GM12878 (cell line): ENCODE measurements at regions of chr9 and their contacts with region 1.

Region 1: DNA sequence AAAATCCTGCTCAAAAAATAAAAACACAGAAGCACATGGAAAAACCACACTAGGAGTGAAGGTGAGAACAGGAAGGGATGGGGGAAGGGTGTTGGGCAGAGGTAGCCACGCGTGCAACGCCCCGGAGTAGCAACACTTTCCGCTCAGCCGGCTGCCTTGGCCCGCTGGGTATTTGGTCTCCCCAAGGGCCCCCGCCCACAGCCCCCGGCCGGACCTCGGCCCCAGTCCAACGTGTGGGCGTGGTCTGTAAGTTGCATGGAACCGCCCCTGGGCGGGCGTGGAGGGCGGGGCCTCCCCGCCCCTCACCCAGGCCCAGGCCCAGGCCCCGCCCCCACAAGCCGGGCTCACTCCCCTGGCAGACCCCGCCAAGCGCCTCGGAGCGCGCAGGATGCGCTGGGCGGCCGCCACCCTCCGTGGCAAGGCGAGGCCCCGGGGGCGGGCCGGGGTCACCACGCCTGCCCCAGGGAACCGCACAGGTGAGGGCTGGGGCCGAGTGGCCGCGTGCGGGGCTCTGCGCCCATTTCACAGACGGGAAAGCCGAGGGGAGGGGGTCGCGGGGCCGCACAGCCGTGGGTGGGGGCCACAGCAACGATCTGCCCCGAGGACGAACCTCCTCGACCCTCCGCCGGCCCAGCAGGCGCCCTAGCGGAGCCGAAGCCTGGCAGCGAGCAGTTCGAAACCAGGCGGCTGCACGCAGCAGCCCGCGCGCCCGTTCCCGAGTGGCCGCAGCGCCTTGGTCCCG is at the start of gene SUSD3:
- DNase-seq: peak; percentile 60
- ATAC-seq: peak; percentile 77
- H3K4me3 ChIP-seq: peak within 1 kb of the TSS; percentile 81
- H3K27ac ChIP-seq: peak within 1 kb of the TSS; percentile 88
- H3K4me1 ChIP-seq: peaks cover 49% of the 10 kb centered on the region
- H3K27me3 ChIP-seq: no peaks in the 10 kb centered on the region
- CTCF ChIP-seq: no peak
- EP300 ChIP-seq: peak in 1 of 2 experiments; percentile 42; a peak in 2 of 4 replicates
- POLR2A ChIP-seq: peak; percentile 64
- RAD21 ChIP-seq: no peak
- polyA plus RNA-seq, gene SUSD3: 2.5 to 15.1 TPM

Region 2: GRCh38 chr9:92860867-92861266 is 197.7 kb before region 1 on chr9:
- CTCF ChIA-PET with region 1: no interaction called
- POLR2A ChIA-PET with region 1: no interaction called
- RAD21 ChIA-PET with region 1: no interaction called
- SMC1A ChIA-PET with region 1: no interaction called
- in situ Hi-C with region 1: no loop called
- intact Hi-C with region 1: no loop called
- DNase-seq: no peak
- ATAC-seq: no peak
- H3K4me3 ChIP-seq: no peak overlapping the region
- H3K27ac ChIP-seq: no peak overlapping the region
- H3K4me1 ChIP-seq: no peaks in the 10 kb centered on the region
- H3K27me3 ChIP-seq: no peaks in the 10 kb centered on the region
- CTCF ChIP-seq: no peak
- EP300 ChIP-seq: no peak
- POLR2A ChIP-seq: no peak
- RAD21 ChIP-seq: no peak

Region 3: GRCh38 chr9:93028448-93029006 is 30.0 kb before region 1 on chr9:
- CTCF ChIA-PET with region 1: interaction called, 5 read pairs
- POLR2A ChIA-PET with region 1: interaction called, 17 read pairs
- RAD21 ChIA-PET with region 1: interaction called, 8 read pairs
- SMC1A ChIA-PET with region 1: interaction called, 15 read pairs
- in situ Hi-C with region 1: no loop called
- intact Hi-C with region 1: loop called (anchors 2 kb)
- DNase-seq: peak; percentile 59
- ATAC-seq: peak; percentile 86
- H3K4me3 ChIP-seq: no peak overlapping the region
- H3K27ac ChIP-seq: peak overlapping the region; percentile 58
- H3K4me1 ChIP-seq: peaks cover 16% of the 10 kb centered on the region
- H3K27me3 ChIP-seq: no peaks in the 10 kb centered on the region
- CTCF ChIP-seq: no peak
- EP300 ChIP-seq: no peak
- POLR2A ChIP-seq: no peak
- RAD21 ChIP-seq: no peak

Region 4: GRCh38 chr9:93095205-93096130 is 36.9 kb after region 1 on chr9:
- CTCF ChIA-PET with region 1: interaction called, 9 read pairs
- POLR2A ChIA-PET with region 1: interaction called, 36 read pairs
- RAD21 ChIA-PET with region 1: interaction called, 13 read pairs
- SMC1A ChIA-PET with region 1: interaction called, 14 read pairs
- in situ Hi-C with region 1: no loop called
- intact Hi-C with region 1: no loop called
- DNase-seq: peak; percentile 85
- ATAC-seq: peak; percentile 81
- H3K4me3 ChIP-seq: peak overlapping the region; percentile 54
- H3K27ac ChIP-seq: peak overlapping the region; percentile 99
- H3K4me1 ChIP-seq: peaks cover 61% of the 10 kb centered on the region
- H3K27me3 ChIP-seq: no peaks in the 10 kb centered on the region
- CTCF ChIP-seq: no peak
- EP300 ChIP-seq: no peak
- POLR2A ChIP-seq: peak; percentile 78
- RAD21 ChIP-seq: no peak

Region 5: DNA sequence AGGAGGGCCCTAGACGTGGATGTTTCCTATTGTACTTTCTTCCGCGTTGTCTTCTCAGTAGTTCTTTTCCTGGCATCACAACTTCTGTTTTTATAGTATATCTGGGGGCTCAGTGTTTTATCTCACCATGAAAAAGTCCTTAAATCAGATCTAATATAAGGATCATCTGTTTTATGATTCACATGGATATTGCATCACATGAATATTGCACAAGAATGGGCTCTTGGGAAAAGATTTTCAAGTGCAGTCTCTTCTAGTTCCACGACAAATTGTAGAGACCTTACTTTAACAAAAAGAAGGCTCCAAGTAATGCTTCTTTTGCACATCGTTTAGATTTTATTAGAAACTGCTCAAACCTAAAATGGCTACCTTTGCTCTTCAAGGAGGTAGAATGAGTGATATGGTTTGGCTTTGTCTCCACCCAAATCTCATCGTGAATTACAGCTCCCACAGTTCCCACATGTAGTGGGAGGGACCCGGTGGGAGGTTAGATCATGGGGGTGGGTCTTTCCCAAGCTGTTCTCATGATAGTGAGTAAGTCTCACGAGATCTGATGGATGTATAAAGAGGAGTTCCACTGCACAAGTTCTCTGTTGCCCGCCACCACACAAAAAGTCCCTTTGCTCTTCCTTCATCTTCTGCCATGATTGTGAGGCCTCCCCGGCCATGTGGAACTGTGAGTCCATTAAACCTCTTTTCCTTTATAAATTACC is 339.3 kb after region 1 on chr9:
- CTCF ChIA-PET with region 1: no interaction called
- POLR2A ChIA-PET with region 1: no interaction called
- RAD21 ChIA-PET with region 1: no interaction called
- SMC1A ChIA-PET with region 1: no interaction called
- in situ Hi-C with region 1: no loop called
- intact Hi-C with region 1: no loop called
- DNase-seq: no peak
- ATAC-seq: no peak
- H3K4me3 ChIP-seq: no peak overlapping the region
- H3K27ac ChIP-seq: no peak overlapping the region
- H3K4me1 ChIP-seq: no peaks in the 10 kb centered on the region
- H3K27me3 ChIP-seq: peaks cover 0 to 2% of the 10 kb centered on the region in 2 experiments; a peak in 1 of 4 replicates
- CTCF ChIP-seq: no peak
- EP300 ChIP-seq: no peak
- POLR2A ChIP-seq: no peak
- RAD21 ChIP-seq: no peak